Thyroid gland (tissue), 4 donors: ENCODE measurements at regions of chr22 and their contacts with region 1.

Region 1: GRCh38 chr22:38317122-38317994 is at the start of gene CSNK1E:
- DNase-seq: peak; percentile 79 to 82
- H3K4me3 ChIP-seq: peak within 1 kb of the TSS; percentile 42 to 81 (median 71)
- H3K27ac ChIP-seq: peak within 1 kb of the TSS; percentile 97 to 99 (median 97)
- H3K4me1 ChIP-seq: peaks cover 30 to 36% of the 10 kb centered on the region in 2 donors
- H3K27me3 ChIP-seq: no peaks in the 10 kb centered on the region
- CTCF ChIP-seq: no peak
- POLR2A ChIP-seq: peak in 1 of 2 donors; percentile 49
- total RNA-seq, gene CSNK1E: 53.2 to 98.4 (median 69.5) TPM

Region 2: GRCh38 chr22:38201710-38202436 is 115.5 kb before region 1 on chr22 and contains the start of gene MAFF:
- intact Hi-C with region 1: loop called (anchors 5 kb)
- DNase-seq: peak; percentile 96 to 97
- H3K4me3 ChIP-seq: peak within 1 kb of the TSS; percentile 42 to 91 (median 85)
- H3K27ac ChIP-seq: peak within 1 kb of the TSS; percentile 97 to 100 (median 99)
- H3K4me1 ChIP-seq: peaks cover 10 to 28% of the 10 kb centered on the region in 2 donors
- H3K27me3 ChIP-seq: no peaks in the 10 kb centered on the region
- CTCF ChIP-seq: no peak
- POLR2A ChIP-seq: peak; percentile 70 to 87
- total RNA-seq, gene MAFF: 13.1 to 111 (median 24.6) TPM

Region 3: GRCh38 chr22:38272373-38273134 is 44.8 kb before region 1 on chr22 and contains the start of gene TMEM184B:
- intact Hi-C with region 1: loop called (anchors 5 kb)
- DNase-seq: peak; percentile 75 to 77
- H3K4me3 ChIP-seq: peak within 1 kb of the TSS; percentile 95 to 99 (median 97)
- H3K27ac ChIP-seq: peak within 1 kb of the TSS; percentile 96 to 99 (median 96)
- H3K4me1 ChIP-seq: peaks cover 48 to 56% of the 10 kb centered on the region in 2 donors
- H3K27me3 ChIP-seq: no peaks in the 10 kb centered on the region
- CTCF ChIP-seq: no peak
- POLR2A ChIP-seq: peak; percentile 92 to 94
- total RNA-seq, gene TMEM184B: 42.9 to 92.2 (median 74.5) TPM